SK-N-SH (cell line): ENCODE measurements at regions of chr11 and their contacts with region 1.

Region 1: GRCh38 chr11:86608251-86608799 is 64.1 kb downstream of the ME3 start:
- DNase-seq: peak; percentile 40
- H3K4me3 ChIP-seq: peak overlapping the region in 1 of 2 experiments; percentile 27; a peak in 2 of 4 replicates
- H3K27ac ChIP-seq: peak overlapping the region; percentile 65 to 78; a peak in 3 of 4 replicates
- H3K4me1 ChIP-seq: peaks cover 6 to 15% of the 10 kb centered on the region in 2 experiments; a peak in 3 of 4 replicates
- H3K27me3 ChIP-seq: no peaks in the 10 kb centered on the region
- CTCF ChIP-seq: peak; percentile 99
- EP300 ChIP-seq: no peak; a peak in 1 of 4 replicates
- RAD21 ChIP-seq: peak; percentile 54

Region 2: GRCh38 chr11:86497790-86498189 is 110.5 kb before region 1 on chr11:
- CTCF ChIA-PET with region 1: no interaction called
- POLR2A ChIA-PET with region 1: no interaction called
- DNase-seq: no peak
- H3K4me3 ChIP-seq: no peak overlapping the region
- H3K27ac ChIP-seq: no peak overlapping the region
- H3K4me1 ChIP-seq: peaks cover 0 to 6% of the 10 kb centered on the region in 2 experiments; a peak in 1 of 4 replicates
- H3K27me3 ChIP-seq: no peaks in the 10 kb centered on the region
- CTCF ChIP-seq: no peak
- EP300 ChIP-seq: no peak
- RAD21 ChIP-seq: no peak

Region 3: DNA sequence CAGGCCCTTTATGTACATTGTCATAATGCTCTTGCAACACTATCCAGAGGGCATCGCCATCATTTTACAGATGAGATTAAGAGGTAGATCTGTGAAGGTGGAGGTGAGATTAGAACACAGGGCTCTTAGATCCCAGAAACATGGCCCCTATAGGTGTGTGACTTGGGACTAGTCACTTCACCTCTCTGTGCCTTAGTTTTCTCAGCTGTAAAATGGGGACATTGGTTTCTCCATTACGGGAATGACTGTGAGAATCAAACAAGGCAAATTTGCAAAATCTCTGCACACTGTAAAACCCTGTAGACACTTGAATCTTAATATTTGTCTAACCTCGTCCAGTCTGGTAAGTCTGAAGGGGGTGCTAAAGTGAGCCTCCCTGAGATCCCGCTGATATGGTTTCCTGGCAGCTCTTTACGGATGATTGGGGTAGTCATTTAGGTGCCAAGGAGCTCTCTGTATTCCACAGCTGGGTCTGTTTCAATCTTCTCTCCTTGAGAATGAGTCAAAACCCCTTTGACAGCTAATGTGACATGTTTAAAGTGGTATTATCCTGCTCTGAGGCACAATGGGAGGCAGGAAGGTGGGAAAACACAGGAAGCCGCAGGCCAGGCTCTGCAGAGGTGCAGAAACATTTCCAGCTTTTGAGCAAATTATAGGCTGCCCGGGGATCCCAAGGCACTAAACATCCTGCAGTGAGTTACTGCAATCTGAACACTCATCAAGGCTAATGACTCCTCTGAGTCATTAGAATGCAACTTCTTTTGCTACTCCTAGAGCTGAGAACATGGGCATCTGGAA is 92.8 kb before region 1 on chr11:
- CTCF ChIA-PET with region 1: no interaction called
- POLR2A ChIA-PET with region 1: no interaction called
- DNase-seq: peak; percentile 43
- H3K4me3 ChIP-seq: no peak overlapping the region
- H3K27ac ChIP-seq: peak overlapping the region; percentile 43 to 79; a peak in 3 of 4 replicates
- H3K4me1 ChIP-seq: peaks cover 12 to 48% of the 10 kb centered on the region in 2 experiments
- H3K27me3 ChIP-seq: no peaks in the 10 kb centered on the region
- CTCF ChIP-seq: no peak
- EP300 ChIP-seq: peak in 1 of 2 experiments; percentile 62; a peak in 1 of 4 replicates
- RAD21 ChIP-seq: no peak

Region 4: GRCh38 chr11:86548271-86548917 is 59.9 kb before region 1 on chr11:
- CTCF ChIA-PET with region 1: interaction called, 11 read pairs
- POLR2A ChIA-PET with region 1: no interaction called
- DNase-seq: no peak
- H3K4me3 ChIP-seq: no peak overlapping the region
- H3K27ac ChIP-seq: peak overlapping the region; percentile 59 to 70
- H3K4me1 ChIP-seq: peaks cover 6 to 24% of the 10 kb centered on the region in 2 experiments
- H3K27me3 ChIP-seq: no peaks in the 10 kb centered on the region
- CTCF ChIP-seq: no peak
- EP300 ChIP-seq: peak in 1 of 2 experiments; percentile 42; a peak in 1 of 4 replicates
- RAD21 ChIP-seq: no peak

Region 5: DNA sequence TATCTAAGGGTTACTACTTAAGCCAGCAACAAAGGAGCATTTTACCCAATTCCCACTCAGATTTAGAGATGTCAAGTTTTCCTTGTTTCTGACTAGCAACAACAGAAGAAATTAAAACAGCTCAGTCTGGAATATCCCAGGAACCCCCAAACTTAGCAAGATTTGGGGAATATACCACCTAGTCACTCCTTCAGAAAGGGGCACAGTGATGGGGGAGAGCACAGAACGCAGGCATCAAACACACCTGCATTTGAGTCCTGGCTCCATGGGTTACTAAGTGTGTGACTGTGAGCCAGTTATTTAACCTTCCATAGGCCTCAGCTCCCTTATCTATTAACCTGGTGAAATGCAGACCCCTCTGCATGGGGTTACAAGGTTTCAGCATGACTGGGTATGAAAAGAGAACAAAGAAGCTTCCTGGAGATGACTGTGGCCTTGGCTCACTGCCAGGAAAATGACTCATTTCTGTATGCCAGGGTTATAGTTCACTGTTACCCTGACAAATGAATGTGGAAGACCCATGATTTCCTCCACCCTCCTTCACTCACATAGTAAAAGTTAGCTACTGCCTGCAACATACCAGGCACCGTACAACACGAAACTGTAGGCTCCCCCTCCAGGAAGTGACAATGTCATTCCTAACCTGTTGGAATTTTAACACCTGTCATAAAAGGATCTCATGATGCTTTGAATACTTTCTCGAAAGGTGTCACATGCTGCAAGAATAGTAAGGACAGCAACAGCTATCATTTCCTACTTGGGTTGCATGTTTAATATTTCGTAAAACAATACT is 15.5 kb before region 1 on chr11:
- CTCF ChIA-PET with region 1: interaction called, 15 read pairs
- POLR2A ChIA-PET with region 1: no interaction called
- DNase-seq: peak; percentile 27
- H3K4me3 ChIP-seq: no peak overlapping the region
- H3K27ac ChIP-seq: peak overlapping the region; percentile 30 to 95
- H3K4me1 ChIP-seq: peaks cover 6 to 37% of the 10 kb centered on the region in 2 experiments
- H3K27me3 ChIP-seq: no peaks in the 10 kb centered on the region
- CTCF ChIP-seq: no peak
- EP300 ChIP-seq: peak; percentile 32 to 87; a peak in 2 of 4 replicates
- RAD21 ChIP-seq: no peak

Region 6: DNA sequence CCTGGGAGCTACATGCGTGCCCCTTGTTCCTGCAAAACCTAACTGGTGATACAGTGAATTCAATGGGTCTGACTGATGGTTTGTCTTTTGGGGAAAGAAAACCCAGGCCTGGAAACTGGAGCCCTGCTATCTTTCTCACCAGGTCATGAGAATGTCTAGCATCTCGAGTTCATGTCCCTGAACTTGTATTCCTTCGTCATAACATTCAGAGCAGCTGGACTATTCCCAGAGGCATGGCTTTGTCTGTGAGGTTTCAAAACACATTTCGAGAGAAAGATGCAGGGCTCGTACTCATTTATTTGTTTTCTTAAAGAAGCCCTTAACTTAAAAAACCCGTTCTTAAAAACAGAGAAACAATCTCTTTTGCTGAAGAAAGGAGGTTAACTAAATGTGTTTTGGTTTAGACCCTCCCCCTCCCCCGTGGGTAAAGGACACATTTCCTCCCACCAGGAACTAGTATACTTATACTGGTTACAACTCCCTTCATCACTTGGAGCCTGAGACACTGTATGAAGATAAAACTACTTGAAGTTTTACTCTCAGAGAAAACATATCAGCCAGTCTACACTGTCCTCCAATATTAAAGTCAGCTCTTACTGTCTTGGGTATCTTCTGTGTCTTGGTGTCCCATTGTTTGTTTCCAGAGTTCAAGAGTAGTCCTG is 20.9 kb after region 1 on chr11:
- CTCF ChIA-PET with region 1: interaction called, 22 read pairs
- POLR2A ChIA-PET with region 1: no interaction called
- DNase-seq: no peak
- H3K4me3 ChIP-seq: no peak overlapping the region
- H3K27ac ChIP-seq: no peak overlapping the region
- H3K4me1 ChIP-seq: peaks cover 5 to 15% of the 10 kb centered on the region in 2 experiments; a peak in 3 of 4 replicates
- H3K27me3 ChIP-seq: no peaks in the 10 kb centered on the region
- CTCF ChIP-seq: no peak
- EP300 ChIP-seq: no peak
- RAD21 ChIP-seq: no peak

Region 7: GRCh38 chr11:86698639-86699400 is 90.5 kb after region 1 on chr11:
- CTCF ChIA-PET with region 1: no interaction called
- POLR2A ChIA-PET with region 1: no interaction called
- DNase-seq: no peak
- H3K4me3 ChIP-seq: no peak overlapping the region
- H3K27ac ChIP-seq: 0 out of 4 replicates have a peak overlapping the region, but pooled peaks of 1 of the 2 experiments have one; percentile 8
- H3K4me1 ChIP-seq: peaks cover 0 to 45% of the 10 kb centered on the region in 2 experiments; a peak in 3 of 4 replicates
- H3K27me3 ChIP-seq: no peaks in the 10 kb centered on the region
- CTCF ChIP-seq: no peak
- EP300 ChIP-seq: no peak
- RAD21 ChIP-seq: no peak

Region 8: GRCh38 chr11:86818466-86819192 is 210.3 kb after region 1 on chr11:
- CTCF ChIA-PET with region 1: interaction called, 13 read pairs
- POLR2A ChIA-PET with region 1: no interaction called
- DNase-seq: peak; percentile 51
- H3K4me3 ChIP-seq: peak overlapping the region in 1 of 2 experiments; percentile 1; a peak in 2 of 4 replicates
- H3K27ac ChIP-seq: peak overlapping the region; percentile 83 to 95; a peak in 3 of 4 replicates
- H3K4me1 ChIP-seq: peaks cover 0 to 49% of the 10 kb centered on the region in 2 experiments
- H3K27me3 ChIP-seq: no peaks in the 10 kb centered on the region
- CTCF ChIP-seq: peak; percentile 76
- EP300 ChIP-seq: no peak; a peak in 1 of 4 replicates
- RAD21 ChIP-seq: peak; percentile 95

Region 9: GRCh38 chr11:87432022-87432421 is 823.7 kb after region 1 on chr11:
- CTCF ChIA-PET with region 1: no interaction called
- POLR2A ChIA-PET with region 1: no interaction called
- DNase-seq: no peak
- H3K4me3 ChIP-seq: no peak overlapping the region
- H3K27ac ChIP-seq: no peak overlapping the region
- H3K4me1 ChIP-seq: no peaks in the 10 kb centered on the region
- H3K27me3 ChIP-seq: no peaks in the 10 kb centered on the region
- CTCF ChIP-seq: no peak
- EP300 ChIP-seq: no peak
- RAD21 ChIP-seq: no peak